ENCODE measurements at regions of chr1 and their contacts with region 1.

Region 1: DNA sequence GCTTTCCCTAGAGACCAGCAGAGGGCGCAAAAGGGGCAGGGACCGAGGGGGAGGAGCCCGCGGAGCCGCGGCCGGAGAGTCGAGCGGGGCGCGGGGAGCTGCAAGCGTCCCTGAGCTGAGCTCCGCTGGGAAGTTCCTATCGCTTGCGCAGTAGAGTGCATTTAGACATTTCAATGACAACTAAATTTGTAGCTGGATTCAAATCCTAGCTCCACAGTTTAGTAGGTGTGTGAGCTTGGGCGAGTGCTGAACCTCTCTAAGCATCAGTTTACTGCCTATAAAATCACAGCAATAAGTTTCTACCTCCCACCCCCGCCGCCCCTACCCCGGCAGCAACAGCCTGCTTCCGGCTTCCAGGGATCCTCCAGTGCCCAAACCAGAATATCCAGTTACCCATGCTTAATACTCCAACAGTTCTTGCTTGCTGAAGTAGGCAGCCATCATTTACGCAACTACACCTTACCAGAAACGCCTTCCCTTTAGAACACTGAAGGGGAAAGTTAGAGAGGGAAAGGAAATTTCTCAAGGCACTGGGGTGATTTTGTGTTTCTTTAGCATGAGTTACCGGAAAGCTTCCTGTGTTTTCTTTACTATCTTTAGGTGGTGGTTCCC is 9.1 kb downstream of the TLR5 start:
- DNase-seq: peak; percentile 55
- H3K4me3 ChIP-seq: no peak overlapping the region
- H3K27ac ChIP-seq: no peak overlapping the region
- H3K4me1 ChIP-seq: no peaks in the 10 kb centered on the region
- CTCF ChIP-seq: peak; percentile 85

Region 2: GRCh38 chr1:222792744-222793143 is 341.2 kb before region 1 on chr1:
- CTCF ChIA-PET with region 1: no interaction called
- POLR2A ChIA-PET with region 1: no interaction called
- intact Hi-C with region 1: loop called (anchors 10 kb)
- DNase-seq: peak; percentile 20
- H3K4me3 ChIP-seq: no peak overlapping the region
- H3K27ac ChIP-seq: no peak overlapping the region
- H3K4me1 ChIP-seq: no peaks in the 10 kb centered on the region
- CTCF ChIP-seq: peak; percentile 79

Region 3: GRCh38 chr1:222844189-222844779 is 289.6 kb before region 1 on chr1:
- CTCF ChIA-PET with region 1: no interaction called
- POLR2A ChIA-PET with region 1: no interaction called
- intact Hi-C with region 1: no loop called
- DNase-seq: no peak
- H3K4me3 ChIP-seq: no peak overlapping the region
- H3K27ac ChIP-seq: no peak overlapping the region
- H3K4me1 ChIP-seq: no peaks in the 10 kb centered on the region
- CTCF ChIP-seq: no peak

Region 4: DNA sequence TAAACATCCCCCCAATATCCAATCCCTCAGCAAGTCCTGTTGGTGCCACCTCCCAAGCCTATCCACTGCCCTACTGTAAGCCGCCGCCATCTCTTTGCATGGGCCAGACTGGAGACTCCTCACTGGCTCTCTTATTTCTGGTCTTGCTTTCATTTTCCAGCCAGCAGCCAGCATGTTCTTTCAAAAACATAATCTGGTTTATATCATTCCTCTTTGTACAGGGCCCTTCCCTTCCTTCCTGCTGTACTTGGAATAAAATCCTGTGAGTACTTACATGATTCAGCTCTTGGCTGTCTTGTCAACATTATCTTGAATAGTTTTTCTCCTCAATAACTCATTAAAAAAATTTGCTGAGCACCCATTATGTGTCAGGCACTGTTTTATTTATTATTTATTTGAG is 19.1 kb before region 1 on chr1:
- CTCF ChIA-PET with region 1: no interaction called
- POLR2A ChIA-PET with region 1: no interaction called
- intact Hi-C with region 1: no loop called
- DNase-seq: no peak
- H3K4me3 ChIP-seq: no peak overlapping the region
- H3K27ac ChIP-seq: no peak overlapping the region
- H3K4me1 ChIP-seq: no peaks in the 10 kb centered on the region
- CTCF ChIP-seq: no peak

Region 5: GRCh38 chr1:223153177-223154119 is 19.5 kb after region 1 on chr1:
- CTCF ChIA-PET with region 1: no interaction called
- POLR2A ChIA-PET with region 1: no interaction called
- intact Hi-C with region 1: no loop called
- DNase-seq: no peak
- H3K4me3 ChIP-seq: no peak overlapping the region
- H3K27ac ChIP-seq: no peak overlapping the region
- H3K4me1 ChIP-seq: no peaks in the 10 kb centered on the region
- CTCF ChIP-seq: no peak

Region 6: DNA sequence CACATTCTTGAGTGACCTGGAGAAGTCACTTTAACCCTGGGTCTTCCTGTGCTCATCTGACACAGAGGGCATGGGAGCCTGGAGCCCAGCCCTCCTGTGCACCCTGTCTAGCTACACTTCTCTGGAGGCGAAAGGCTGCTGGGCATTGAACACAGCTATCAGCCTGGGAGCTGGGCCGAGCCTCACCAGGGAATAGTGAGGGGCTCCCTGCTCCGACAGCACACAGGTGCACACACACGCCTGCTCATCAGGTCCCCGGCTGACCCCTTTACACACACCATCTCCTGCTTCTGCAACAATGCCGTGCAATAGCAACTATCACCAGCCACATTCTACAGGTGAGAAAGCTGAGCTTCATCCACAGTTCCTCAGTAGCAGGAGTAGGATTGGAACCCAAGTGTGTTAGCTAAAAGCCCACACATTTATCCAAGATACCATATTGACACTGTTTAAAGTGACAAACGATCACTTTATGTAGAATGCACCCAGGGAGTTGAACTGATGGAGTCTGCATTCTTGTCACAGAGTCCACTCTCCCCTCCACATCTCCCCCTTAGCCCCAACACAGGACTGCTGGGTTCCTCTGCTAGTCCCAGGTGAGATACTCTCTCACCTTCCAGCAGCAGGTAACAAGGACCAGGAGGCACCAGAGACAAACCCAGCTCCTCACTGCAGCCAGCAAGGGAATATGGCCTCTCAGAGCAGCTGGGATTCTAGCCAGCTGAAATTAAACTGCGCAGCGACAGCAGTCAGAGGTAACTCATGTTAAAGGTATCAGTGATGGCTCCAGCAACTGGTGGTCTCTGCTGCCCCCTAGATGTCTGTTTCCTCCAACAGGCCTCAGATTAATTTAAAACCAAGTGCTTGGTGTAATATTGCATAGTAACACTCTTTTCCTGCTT is 549.9 kb after region 1 on chr1:
- CTCF ChIA-PET with region 1: no interaction called
- POLR2A ChIA-PET with region 1: no interaction called
- intact Hi-C with region 1: loop called (anchors 2 kb)
- DNase-seq: peak; percentile 37
- H3K4me3 ChIP-seq: no peak overlapping the region
- H3K27ac ChIP-seq: no peak overlapping the region
- H3K4me1 ChIP-seq: no peaks in the 10 kb centered on the region
- CTCF ChIP-seq: peak; percentile 80

Measured in OCI-LY7 (cell line).